Dorsolateral prefrontal cortex (tissue), 120 donors: ENCODE measurements at regions of chr6 and their contacts with region 1.

Region 1: DNA sequence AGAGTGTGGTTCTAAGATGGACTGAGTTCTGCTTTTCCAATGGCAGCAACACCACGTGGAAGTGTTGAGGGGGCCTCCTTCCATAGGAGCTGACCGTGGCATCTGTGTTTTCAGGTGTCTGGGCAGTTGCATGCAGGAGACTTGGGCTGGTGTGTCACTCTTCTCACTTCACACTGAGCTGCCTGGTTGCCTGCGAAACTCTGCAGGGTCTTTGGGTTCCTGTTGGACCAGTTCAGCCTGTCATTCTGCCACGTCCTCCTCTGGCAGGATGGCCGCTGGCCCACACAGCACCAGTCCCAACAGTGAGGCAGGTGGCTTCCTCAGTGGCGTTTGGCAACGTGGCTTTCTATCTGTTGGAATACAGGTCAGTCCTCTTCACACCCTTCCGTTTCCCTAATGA is 16.1 kb upstream of the UNC93A start:
- DNase-seq: peak in 1 of 10 donors; percentile 33
- H3K4me3 ChIP-seq: no peak overlapping the region
- H3K27ac ChIP-seq: no peak overlapping the region
- H3K27me3 ChIP-seq: peaks cover 0 to 12% (median 0%) of the 10 kb centered on the region in 45 donors
- CTCF ChIP-seq: no peak

Region 2: GRCh38 chr6:167058261-167058660 is 216.7 kb before region 1 on chr6:
- intact Hi-C with region 1: no loop called
- DNase-seq: no peak
- H3K4me3 ChIP-seq: no peak overlapping the region
- H3K27ac ChIP-seq: no peak overlapping the region
- H3K27me3 ChIP-seq: peaks cover 0 to 16% (median 0%) of the 10 kb centered on the region in 45 donors
- CTCF ChIP-seq: no peak

Region 3: GRCh38 chr6:167227984-167228383 is 47.0 kb before region 1 on chr6:
- intact Hi-C with region 1: loop called in 1 of 2 experiments (anchors 5 kb)
- DNase-seq: no peak
- H3K4me3 ChIP-seq: no peak overlapping the region
- H3K27ac ChIP-seq: no peak overlapping the region
- H3K27me3 ChIP-seq: peaks cover 0 to 12% (median 0%) of the 10 kb centered on the region in 45 donors
- CTCF ChIP-seq: no peak

Region 4: DNA sequence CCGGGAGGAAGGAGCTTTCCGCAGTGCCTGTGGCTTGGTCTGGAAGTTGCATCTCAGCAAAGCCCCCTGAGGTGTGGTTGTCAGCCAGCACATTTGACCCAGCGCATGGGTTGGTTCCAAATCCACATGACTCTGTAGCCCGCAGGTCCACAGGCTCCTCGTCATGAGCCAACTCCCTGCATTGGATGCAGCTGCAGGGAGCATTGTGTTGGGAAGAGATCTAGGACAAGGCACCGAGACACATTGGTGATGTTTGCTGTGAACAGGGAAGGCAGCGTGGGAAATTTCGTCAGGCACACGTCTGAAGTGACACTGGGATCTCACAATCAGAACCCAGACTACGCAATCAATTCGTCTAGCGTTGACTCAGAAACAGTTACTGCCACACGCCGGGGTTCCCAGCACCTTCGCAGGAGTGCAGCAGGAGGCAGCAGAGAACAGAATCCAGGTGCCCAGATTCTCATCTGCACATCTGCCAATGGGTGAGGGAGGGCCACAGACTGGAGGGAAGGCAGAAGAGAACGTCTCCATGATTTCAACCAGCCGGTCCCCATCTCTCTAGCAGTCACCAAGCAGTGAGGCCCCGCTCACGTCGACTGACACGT is 226.9 kb after region 1 on chr6:
- intact Hi-C with region 1: no loop called
- DNase-seq: no peak
- H3K4me3 ChIP-seq: no peak overlapping the region
- H3K27ac ChIP-seq: no peak overlapping the region
- H3K27me3 ChIP-seq: peaks cover 0 to 3% (median 0%) of the 10 kb centered on the region in 45 donors
- CTCF ChIP-seq: peak in 3 of 56 donors; percentile 11 to 17 (median 13)